Activated T-helper 2 cell treated with anti-CD3 and anti-CD28 coated beads, Interferon-gamma antibody, Interleukin-2, Interleukin-4, amounts not matched to agents 10 μg/mL and 5 μg/mL and 100 μg/mL, durations not matched to agents 14 hours and 24 hours and 36 hours (primary cell): ENCODE measurements at regions of chr5 and their contacts with region 1.

Region 1: GRCh38 chr5:52709171-52709925 is 78.4 kb upstream of the ITGA1 start:
- DNase-seq: no peak
- H3K4me3 Mint-ChIP-seq: no peak overlapping the region
- H3K27ac Mint-ChIP-seq: peak overlapping the region; percentile 23
- H3K4me1 Mint-ChIP-seq: peaks cover 53% of the 10 kb centered on the region
- H3K27me3 Mint-ChIP-seq: peaks cover 4% of the 10 kb centered on the region

Region 2: DNA sequence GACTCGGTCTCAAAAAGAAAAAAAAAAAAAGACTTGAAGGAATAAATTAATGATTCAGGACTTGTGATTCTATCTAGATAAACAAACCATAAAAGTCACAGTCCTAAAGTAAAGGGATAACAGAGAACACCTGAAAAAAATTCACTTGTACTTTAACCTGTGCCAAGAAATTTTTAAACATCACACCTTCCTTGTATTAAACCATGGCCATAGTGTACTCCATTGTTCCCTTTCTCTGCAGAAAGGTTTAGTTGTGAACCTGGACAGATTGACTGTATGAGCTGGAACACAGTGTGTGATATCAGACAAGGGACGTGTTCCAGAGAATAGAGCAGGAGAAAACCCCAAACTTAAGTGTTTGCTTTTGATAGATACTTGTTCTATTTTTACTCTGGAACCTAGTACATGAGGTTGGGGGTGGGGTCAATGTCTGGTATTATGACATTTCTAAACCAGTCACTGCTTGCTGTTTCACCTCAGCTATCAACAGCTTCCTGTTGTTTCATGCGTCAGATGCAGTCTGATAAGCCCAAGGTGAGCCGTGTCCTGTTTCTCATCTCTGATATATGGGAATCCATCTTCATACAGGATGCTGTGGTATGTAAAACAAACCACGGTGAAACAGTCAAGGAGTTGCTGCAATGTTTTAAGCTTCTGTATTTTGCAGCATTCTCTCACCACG is 15.9 kb after region 1 on chr5:
- intact Hi-C with region 1: loop called (anchors 1 kb)
- DNase-seq: peak; percentile 73
- H3K4me3 Mint-ChIP-seq: peak overlapping the region; percentile 22
- H3K27ac Mint-ChIP-seq: peak overlapping the region; percentile 40
- H3K4me1 Mint-ChIP-seq: peaks cover 61% of the 10 kb centered on the region
- H3K27me3 Mint-ChIP-seq: no peaks in the 10 kb centered on the region

Region 3: GRCh38 chr5:52760695-52761366 is 51.5 kb after region 1 on chr5:
- intact Hi-C with region 1: loop called (anchors 1 kb)
- DNase-seq: no peak
- H3K4me3 Mint-ChIP-seq: no peak overlapping the region
- H3K27ac Mint-ChIP-seq: no peak overlapping the region
- H3K4me1 Mint-ChIP-seq: peaks cover 9% of the 10 kb centered on the region
- H3K27me3 Mint-ChIP-seq: no peaks in the 10 kb centered on the region